T-cell (primary cell): ENCODE measurements at regions of chr17 and their contacts with region 1.

Region 1: GRCh38 chr17:16391451-16391850 is 10.6 kb downstream of the UBB start:
- DNase-seq: no peak
- ATAC-seq: no peak
- H3K4me3 ChIP-seq: no peak overlapping the region
- H3K4me3 Mint-ChIP-seq: no peak overlapping the region
- H3K27ac ChIP-seq: no peak overlapping the region
- H3K27ac Mint-ChIP-seq: no peak overlapping the region
- H3K4me1 ChIP-seq: peaks cover 0 to 11% of the 10 kb centered on the region in 2 experiments
- H3K4me1 Mint-ChIP-seq: peaks cover 6 to 9% (median 8%) of the 10 kb centered on the region in 3 donors
- H3K27me3 ChIP-seq: peaks cover 0 to 16% of the 10 kb centered on the region in 2 experiments
- H3K27me3 Mint-ChIP-seq: no peaks in the 10 kb centered on the region

Region 2: GRCh38 chr17:16415031-16415924 is 23.8 kb after region 1 on chr17 and contains the start of gene TRPV2:
- CTCF ChIA-PET with region 1: interaction called, 3 to 13 read pairs
- POLR2A ChIA-PET with region 1: interaction called, 5 to 11 read pairs
- DNase-seq: peak in 34 of 35 experiments; percentile 24 to 69 (median 42)
- ATAC-seq: peak; percentile 48 to 75 (median 68)
- H3K4me3 ChIP-seq: peak within 1 kb of the TSS; percentile 86 to 92
- H3K4me3 Mint-ChIP-seq: peak within 1 kb of the TSS; percentile 90 to 98 (median 95)
- H3K27ac ChIP-seq: peak within 1 kb of the TSS; percentile 88
- H3K27ac Mint-ChIP-seq: peak within 1 kb of the TSS; percentile 99
- H3K4me1 ChIP-seq: peaks cover 8 to 60% of the 10 kb centered on the region in 2 experiments
- H3K4me1 Mint-ChIP-seq: peaks cover 45 to 52% (median 50%) of the 10 kb centered on the region in 3 donors
- H3K27me3 ChIP-seq: no peaks in the 10 kb centered on the region
- H3K27me3 Mint-ChIP-seq: no peaks in the 10 kb centered on the region
- total RNA-seq, gene TRPV2: 91.3 to 127 (median 122) TPM